ENCODE measurements at regions of chr11 and their contacts with region 1.

Region 1: DNA sequence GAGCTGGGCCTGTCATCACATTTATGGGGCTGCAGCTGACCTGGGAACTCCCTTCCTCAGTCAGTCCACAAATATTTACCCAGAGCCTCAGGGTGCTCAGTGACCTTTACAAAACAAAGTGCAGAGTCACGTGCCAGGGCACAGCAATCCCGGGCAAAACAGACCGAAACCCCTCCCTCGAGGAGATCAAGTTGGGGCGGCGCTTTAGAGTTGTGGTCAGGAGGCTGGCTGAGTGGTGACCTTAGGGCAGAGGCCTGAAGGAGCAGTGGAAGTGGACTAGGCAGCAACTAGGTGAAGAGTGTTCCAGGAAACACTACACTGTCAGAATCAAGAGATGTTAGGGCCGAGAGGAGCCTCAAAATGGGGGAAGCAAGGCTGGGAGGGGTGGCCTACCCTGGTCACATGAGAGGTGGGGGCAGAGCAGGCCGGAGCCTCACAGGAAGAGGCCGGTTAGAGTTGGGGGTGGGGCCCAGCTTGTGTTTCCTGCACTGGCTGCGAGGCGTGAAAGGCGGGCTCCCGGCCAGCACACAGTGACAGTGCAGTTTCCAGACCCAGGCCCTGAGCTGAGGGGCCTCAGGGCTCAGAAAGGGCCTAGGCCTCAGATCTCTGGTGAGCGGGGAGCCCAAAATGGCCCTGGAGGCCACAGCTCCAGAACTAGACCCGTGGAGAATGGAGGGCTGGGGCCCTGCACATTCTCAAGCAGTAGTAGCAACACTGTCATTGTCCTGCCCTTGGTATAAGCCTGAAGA is 3.7 kb upstream of the NEAT1 start:
- DNase-seq: peak; percentile 85 to 99 (median 89)
- ATAC-seq: peak; percentile 57
- H3K4me3 ChIP-seq: peak overlapping the region; percentile 43
- H3K27ac ChIP-seq: peak overlapping the region; percentile 98
- H3K4me1 ChIP-seq: peaks cover 51 to 75% of the 10 kb centered on the region in 2 experiments
- H3K27me3 ChIP-seq: no peaks in the 10 kb centered on the region
- CTCF ChIP-seq: no peak
- EP300 ChIP-seq: peak; percentile 70
- POLR2A ChIP-seq: peak; percentile 90
- RAD21 ChIP-seq: peak in 1 of 2 experiments; percentile 28; a peak in 1 of 4 replicates

Region 2: GRCh38 chr11:65204646-65205601 is 214.0 kb before region 1 on chr11:
- CTCF ChIA-PET with region 1: no interaction called
- POLR2A ChIA-PET with region 1: no interaction called
- in situ Hi-C with region 1: no loop called
- intact Hi-C with region 1: no loop called
- DNase-seq: peak; percentile 68 to 91 (median 86)
- ATAC-seq: peak; percentile 95
- H3K4me3 ChIP-seq: no peak overlapping the region
- H3K27ac ChIP-seq: no peak overlapping the region
- H3K4me1 ChIP-seq: peaks cover 0 to 18% of the 10 kb centered on the region in 2 experiments; a peak in 2 of 5 replicates
- H3K27me3 ChIP-seq: no peaks in the 10 kb centered on the region
- CTCF ChIP-seq: peak; percentile 90 to 94 (median 91)
- EP300 ChIP-seq: no peak
- POLR2A ChIP-seq: no peak
- RAD21 ChIP-seq: peak; percentile 58 to 77

Region 3: GRCh38 chr11:65314501-65315203 is 104.2 kb before region 1 on chr11 and contains the start of gene CDC42EP2:
- CTCF ChIA-PET with region 1: no interaction called
- POLR2A ChIA-PET with region 1: interaction called, 21 read pairs
- in situ Hi-C with region 1: no loop called
- intact Hi-C with region 1: no loop called
- DNase-seq: peak; percentile 92 to 99 (median 97)
- ATAC-seq: peak; percentile 96
- H3K4me3 ChIP-seq: peak within 1 kb of the TSS; percentile 77
- H3K27ac ChIP-seq: peak within 1 kb of the TSS; percentile 64
- H3K4me1 ChIP-seq: peaks cover 16 to 48% of the 10 kb centered on the region in 2 experiments; a peak in 4 of 5 replicates
- H3K27me3 ChIP-seq: no peaks in the 10 kb centered on the region
- CTCF ChIP-seq: no peak; a peak in 1 of 6 replicates
- EP300 ChIP-seq: no peak
- POLR2A ChIP-seq: peak; percentile 79
- RAD21 ChIP-seq: no peak
- polyA plus RNA-seq, gene CDC42EP2: 0.27 to 0.52 TPM

Region 4: DNA sequence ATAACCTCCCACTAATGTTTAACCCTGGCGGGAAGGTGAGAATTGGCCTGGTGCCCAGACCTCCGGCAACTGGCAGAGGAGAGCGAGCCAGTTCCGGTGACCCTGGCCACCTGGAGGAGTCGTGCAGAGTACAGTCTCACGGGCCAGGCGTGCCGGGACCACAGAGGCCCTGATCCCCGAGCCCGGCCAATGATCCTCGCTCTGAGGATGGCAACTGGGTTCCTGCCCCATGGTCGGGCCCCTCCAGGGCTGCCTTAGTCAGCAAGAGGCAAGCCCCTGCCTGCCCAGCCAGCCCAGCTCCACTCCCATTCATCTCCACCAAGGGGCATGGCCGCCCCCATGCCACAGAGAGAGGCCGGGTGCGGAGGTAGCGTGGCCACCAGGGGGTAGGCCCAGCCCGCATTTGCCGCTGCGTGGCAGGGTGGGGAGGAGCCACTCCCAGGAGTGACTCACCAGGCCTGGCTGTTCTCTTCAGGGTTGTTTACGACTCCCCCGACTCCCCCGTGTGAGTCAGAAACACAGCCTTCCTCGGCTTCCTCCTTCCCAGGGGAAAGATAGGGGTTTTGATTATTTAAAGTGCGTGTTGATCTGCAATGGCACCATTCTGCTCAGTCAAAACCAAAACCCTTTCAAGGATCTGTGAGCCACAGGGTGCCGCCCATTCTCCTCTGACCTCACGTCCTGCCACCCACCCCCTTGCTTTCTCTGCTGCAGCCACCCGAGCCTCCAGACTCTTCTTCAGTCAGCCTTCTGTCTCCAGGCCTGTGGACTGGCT is 36.7 kb before region 1 on chr11 and contains the start of gene SLC25A45:
- CTCF ChIA-PET with region 1: interaction called, 3 read pairs
- POLR2A ChIA-PET with region 1: interaction called, 250 read pairs
- in situ Hi-C with region 1: no loop called
- intact Hi-C with region 1: loop called (anchors 1 kb)
- DNase-seq: peak; percentile 86 to 96 (median 90)
- ATAC-seq: peak; percentile 93
- H3K4me3 ChIP-seq: peak within 1 kb of the TSS; percentile 37
- H3K27ac ChIP-seq: peak within 1 kb of the TSS; percentile 93
- H3K4me1 ChIP-seq: peaks cover 35 to 81% of the 10 kb centered on the region in 2 experiments
- H3K27me3 ChIP-seq: no peaks in the 10 kb centered on the region
- CTCF ChIP-seq: peak; percentile 84 to 92 (median 91)
- EP300 ChIP-seq: peak; percentile 85
- POLR2A ChIP-seq: peak; percentile 73
- RAD21 ChIP-seq: peak; percentile 93 to 95
- polyA plus RNA-seq, gene SLC25A45: 0.15 to 0.34 TPM

Region 5: GRCh38 chr11:65448418-65449105 is 29.7 kb after region 1 on chr11:
- CTCF ChIA-PET with region 1: no interaction called
- POLR2A ChIA-PET with region 1: interaction called, 93 read pairs
- in situ Hi-C with region 1: no loop called
- intact Hi-C with region 1: no loop called
- DNase-seq: peak; percentile 73 to 90 (median 78)
- ATAC-seq: peak; percentile 82
- H3K4me3 ChIP-seq: no peak overlapping the region
- H3K27ac ChIP-seq: peak overlapping the region; percentile 64
- H3K4me1 ChIP-seq: peaks cover 17 to 46% of the 10 kb centered on the region in 2 experiments; a peak in 4 of 5 replicates
- H3K27me3 ChIP-seq: no peaks in the 10 kb centered on the region
- CTCF ChIP-seq: no peak
- EP300 ChIP-seq: no peak
- POLR2A ChIP-seq: 0 out of 2 replicates have a peak, but pooled peaks have one; percentile 25
- RAD21 ChIP-seq: no peak

Region 6: GRCh38 chr11:65506770-65507505 is 88.1 kb after region 1 on chr11:
- CTCF ChIA-PET with region 1: interaction called, 21 read pairs
- POLR2A ChIA-PET with region 1: interaction called, 1,349 read pairs
- in situ Hi-C with region 1: loop called (anchors 5 kb)
- intact Hi-C with region 1: loop called (anchors 1 kb)
- DNase-seq: peak in 1 of 4 experiments; percentile 92
- ATAC-seq: peak; percentile 73
- H3K4me3 ChIP-seq: peak overlapping the region; percentile 84
- H3K27ac ChIP-seq: peak overlapping the region; percentile 99
- H3K4me1 ChIP-seq: peaks cover 8% of the 10 kb centered on the region in 2 experiments; a peak in 4 of 5 replicates
- H3K27me3 ChIP-seq: no peaks in the 10 kb centered on the region
- CTCF ChIP-seq: 0 out of 6 replicates have a peak, but pooled peaks of 1 of the 3 experiments have one; percentile 6
- EP300 ChIP-seq: no peak; the same call in 1 of the 2 replicates
- POLR2A ChIP-seq: peak; percentile 99
- RAD21 ChIP-seq: peak; percentile 14 to 42; a peak in 3 of 4 replicates

Region 7: GRCh38 chr11:65551572-65552398 is 132.9 kb after region 1 on chr11:
- CTCF ChIA-PET with region 1: no interaction called
- POLR2A ChIA-PET with region 1: interaction called, 11 read pairs
- in situ Hi-C with region 1: no loop called
- intact Hi-C with region 1: no loop called
- DNase-seq: peak in 3 of 4 experiments; percentile 46 to 79 (median 54)
- ATAC-seq: peak; percentile 58
- H3K4me3 ChIP-seq: no peak overlapping the region
- H3K27ac ChIP-seq: peak overlapping the region; percentile 37; the same call in 1 of the 3 replicates
- H3K4me1 ChIP-seq: peaks cover 48 to 84% of the 10 kb centered on the region in 2 experiments
- H3K27me3 ChIP-seq: no peaks in the 10 kb centered on the region
- CTCF ChIP-seq: peak; percentile 65 to 79 (median 66)
- EP300 ChIP-seq: no peak
- POLR2A ChIP-seq: no peak
- RAD21 ChIP-seq: peak in 1 of 2 experiments; percentile 40; a peak in 2 of 4 replicates

Measured in K562 (cell line).